Spleen (tissue), 13 donors: ENCODE measurements at regions of chr4 and their contacts with region 1.

Region 1: DNA sequence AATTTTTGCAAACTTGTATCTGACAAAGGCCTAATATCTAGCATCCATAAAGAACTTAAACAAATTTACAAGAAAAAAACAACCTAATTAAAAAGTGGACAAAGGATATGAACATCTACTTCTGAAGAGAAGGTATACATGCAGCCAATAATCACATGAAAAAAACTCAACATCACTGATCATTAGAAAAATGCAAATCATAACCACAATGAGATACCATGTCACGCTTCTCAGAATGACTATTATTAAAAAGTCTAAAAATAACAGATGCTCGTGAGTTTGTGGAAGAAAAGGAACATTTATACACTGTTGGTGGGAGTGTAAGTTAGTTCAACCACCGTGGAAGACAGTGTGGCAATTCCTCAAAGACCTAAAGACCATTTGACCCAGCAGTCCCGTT is 24.0 kb downstream of the CEP44 start:
- DNase-seq: no peak
- H3K4me3 ChIP-seq: no peak overlapping the region
- H3K27ac ChIP-seq: no peak overlapping the region
- H3K4me1 ChIP-seq: no peaks in the 10 kb centered on the region
- H3K27me3 ChIP-seq: no peaks in the 10 kb centered on the region
- CTCF ChIP-seq: no peak
- POLR2A ChIP-seq: no peak

Region 2: GRCh38 chr4:174096999-174097398 is 210.7 kb before region 1 on chr4:
- intact Hi-C with region 1: no loop called
- DNase-seq: no peak
- H3K4me3 ChIP-seq: no peak overlapping the region
- H3K27ac ChIP-seq: no peak overlapping the region
- H3K4me1 ChIP-seq: no peaks in the 10 kb centered on the region
- H3K27me3 ChIP-seq: peaks cover 0 to 12% (median 0%) of the 10 kb centered on the region in 7 donors
- CTCF ChIP-seq: no peak
- POLR2A ChIP-seq: no peak

Region 3: GRCh38 chr4:174222266-174222872 is 85.3 kb before region 1 on chr4:
- intact Hi-C with region 1: loop called (anchors 10 kb)
- DNase-seq: no peak
- H3K4me3 ChIP-seq: no peak overlapping the region
- H3K27ac ChIP-seq: no peak overlapping the region
- H3K4me1 ChIP-seq: peaks cover 4 to 13% (median 10%) of the 10 kb centered on the region in 6 donors
- H3K27me3 ChIP-seq: peaks cover 0 to 68% (median 30%) of the 10 kb centered on the region in 7 donors
- CTCF ChIP-seq: peak in 6 of 11 experiments; percentile 42 to 61 (median 58)
- POLR2A ChIP-seq: no peak